GM12878 (cell line): ENCODE measurements at regions of chr15 and their contacts with region 1.

Region 1: GRCh38 chr15:90233376-90234095 is at the start of gene CIB1:
- DNase-seq: no peak
- ATAC-seq: peak; percentile 88
- H3K4me3 ChIP-seq: peak within 1 kb of the TSS; percentile 79
- H3K27ac ChIP-seq: peak within 1 kb of the TSS; percentile 85
- H3K4me1 ChIP-seq: peaks cover 28% of the 10 kb centered on the region
- H3K27me3 ChIP-seq: no peaks in the 10 kb centered on the region
- CTCF ChIP-seq: peak in 2 of 3 experiments; percentile 44 to 61; a peak in 3 of 6 replicates
- EP300 ChIP-seq: peak in 1 of 2 experiments; percentile 8; a peak in 1 of 4 replicates
- POLR2A ChIP-seq: peak; percentile 89
- RAD21 ChIP-seq: no peak
- polyA plus RNA-seq, gene CIB1: 10.8 to 42.5 TPM

Region 2: DNA sequence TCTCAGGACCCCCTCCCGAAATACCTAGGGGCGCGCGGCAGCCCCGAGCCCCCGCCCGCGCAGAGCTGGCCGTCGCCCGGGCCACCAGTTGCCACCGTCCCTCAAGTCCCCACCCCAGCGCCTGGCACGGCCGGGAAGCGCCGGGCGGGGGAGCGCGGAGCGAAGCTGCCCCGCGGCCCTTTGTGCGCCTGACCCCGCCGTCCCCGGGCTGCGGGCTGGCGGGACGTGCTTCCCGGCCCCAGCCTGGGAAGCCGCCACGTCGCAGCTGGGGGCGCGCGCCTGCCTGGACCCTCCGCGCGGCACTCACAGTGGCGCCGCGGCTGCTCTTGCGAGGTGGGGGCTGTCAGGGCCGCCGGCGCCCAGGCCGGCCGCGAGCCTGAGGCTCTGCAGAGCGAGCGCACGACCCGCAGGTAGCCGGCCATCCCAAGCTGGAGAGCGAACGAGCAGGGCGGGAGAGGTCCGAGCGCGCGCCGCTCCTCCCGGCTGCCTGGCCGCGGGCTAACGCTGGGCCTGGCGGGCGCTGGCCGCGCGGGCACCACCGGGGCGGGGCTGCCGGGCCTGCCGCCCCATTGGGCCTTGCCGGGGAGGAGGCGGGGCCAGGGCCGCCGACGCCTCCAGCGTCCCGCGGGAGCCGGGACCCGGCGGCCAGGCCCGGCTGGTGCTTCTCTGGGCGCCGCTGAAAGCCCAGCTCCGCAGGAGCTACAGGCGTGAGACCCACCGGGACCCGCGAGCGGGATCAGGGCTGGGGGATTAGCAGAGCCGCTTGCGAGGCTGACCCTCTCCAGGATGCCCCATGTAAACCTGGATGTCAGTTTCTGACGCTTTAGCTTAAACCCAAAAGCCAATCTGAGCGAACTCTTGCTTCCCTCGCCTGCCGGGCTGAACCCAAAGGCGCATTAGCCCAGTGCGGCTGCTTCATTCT is 131.3 kb before region 1 on chr15 and contains the start of gene IDH2:
- CTCF ChIA-PET with region 1: interaction called, 3 read pairs
- POLR2A ChIA-PET with region 1: interaction called, 10 read pairs
- RAD21 ChIA-PET with region 1: interaction called, 10 read pairs
- SMC1A ChIA-PET with region 1: interaction called, 3 read pairs
- in situ Hi-C with region 1: no loop called
- intact Hi-C with region 1: loop called (anchors 5 kb)
- DNase-seq: no peak
- ATAC-seq: peak; percentile 76
- H3K4me3 ChIP-seq: peak within 1 kb of the TSS; percentile 79
- H3K27ac ChIP-seq: peak within 1 kb of the TSS; percentile 91
- H3K4me1 ChIP-seq: peaks cover 34% of the 10 kb centered on the region
- H3K27me3 ChIP-seq: no peaks in the 10 kb centered on the region
- CTCF ChIP-seq: no peak
- EP300 ChIP-seq: no peak
- POLR2A ChIP-seq: peak; percentile 91
- RAD21 ChIP-seq: no peak
- polyA plus RNA-seq, gene IDH2: 2.3 to 15.4 TPM

Region 3: GRCh38 chr15:90184786-90185569 is 48.6 kb before region 1 on chr15:
- CTCF ChIA-PET with region 1: interaction called, 7 read pairs
- POLR2A ChIA-PET with region 1: interaction called, 30 read pairs
- RAD21 ChIA-PET with region 1: interaction called, 6 read pairs
- SMC1A ChIA-PET with region 1: interaction called, 12 read pairs
- in situ Hi-C with region 1: no loop called
- intact Hi-C with region 1: loop called (anchors 5 kb)
- DNase-seq: no peak
- ATAC-seq: peak; percentile 92
- H3K4me3 ChIP-seq: peak overlapping the region; percentile 80
- H3K27ac ChIP-seq: peak overlapping the region; percentile 86
- H3K4me1 ChIP-seq: peaks cover 16% of the 10 kb centered on the region
- H3K27me3 ChIP-seq: no peaks in the 10 kb centered on the region
- CTCF ChIP-seq: no peak
- EP300 ChIP-seq: no peak
- POLR2A ChIP-seq: peak; percentile 66
- RAD21 ChIP-seq: no peak

Region 4: DNA sequence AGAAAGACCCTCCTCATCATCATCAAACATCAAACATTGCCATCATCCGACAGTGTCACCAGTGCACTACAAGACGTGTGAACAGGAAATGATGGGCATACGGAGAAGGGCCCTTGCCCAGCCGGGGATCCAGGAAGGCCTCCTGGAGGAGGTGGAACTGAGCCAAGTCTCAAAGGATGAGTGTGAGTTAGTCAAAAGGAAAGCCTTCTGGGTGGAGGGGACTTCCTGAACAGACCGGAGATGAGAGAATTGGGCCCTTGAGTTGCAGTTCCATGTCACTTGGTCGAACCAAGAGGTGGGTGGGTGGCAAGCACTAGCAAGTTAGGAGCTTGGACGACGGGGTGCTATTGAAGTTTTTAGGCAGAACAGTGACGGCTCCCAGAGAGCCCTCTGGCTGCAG is 23.9 kb before region 1 on chr15:
- CTCF ChIA-PET with region 1: interaction called, 8 read pairs
- POLR2A ChIA-PET with region 1: interaction called, 25 read pairs
- RAD21 ChIA-PET with region 1: interaction called, 3 read pairs
- SMC1A ChIA-PET with region 1: interaction called, 11 read pairs
- in situ Hi-C with region 1: no loop called
- intact Hi-C with region 1: no loop called
- DNase-seq: peak; percentile 57
- ATAC-seq: peak; percentile 87
- H3K4me3 ChIP-seq: no peak overlapping the region
- H3K27ac ChIP-seq: peak overlapping the region; percentile 56
- H3K4me1 ChIP-seq: peaks cover 25% of the 10 kb centered on the region
- H3K27me3 ChIP-seq: no peaks in the 10 kb centered on the region
- CTCF ChIP-seq: no peak
- EP300 ChIP-seq: 0 out of 4 replicates have a peak, but pooled peaks of 1 of the 2 experiments have one; percentile 36
- POLR2A ChIP-seq: no peak
- RAD21 ChIP-seq: no peak

Region 5: DNA sequence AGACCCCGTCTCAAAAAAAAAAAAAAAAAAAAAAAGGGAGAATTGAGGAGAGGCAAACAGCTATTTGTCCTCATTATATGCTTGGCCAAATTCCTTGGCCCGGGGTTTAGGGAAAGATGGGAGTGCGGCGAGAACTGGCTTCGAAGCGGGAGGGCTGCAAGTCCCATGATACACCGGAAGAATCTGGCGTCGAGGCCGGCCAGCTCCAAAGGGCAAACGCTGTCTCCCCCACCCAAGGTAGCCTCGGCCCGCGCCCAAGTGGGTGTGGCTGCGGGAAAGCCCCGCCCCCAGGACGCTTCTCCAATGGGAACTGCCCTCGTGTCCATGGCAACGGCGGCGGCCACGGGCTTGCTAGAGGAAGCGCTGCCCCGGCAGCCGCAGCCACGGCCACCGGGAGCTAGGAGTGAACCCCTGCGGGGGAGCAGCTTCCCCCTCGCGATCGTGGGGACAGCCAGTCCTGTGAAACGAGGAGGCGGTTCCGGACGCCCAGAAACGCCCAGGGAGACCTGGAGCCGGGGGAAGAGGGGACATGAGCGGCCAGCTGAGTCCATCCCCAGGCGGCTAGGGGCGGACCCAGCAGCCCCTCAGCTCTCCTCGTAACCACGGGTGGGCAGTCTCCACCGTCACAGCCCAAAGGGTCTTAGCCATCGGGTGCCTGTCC is 15.8 kb after region 1 on chr15 and contains the start of gene TTLL13:
- CTCF ChIA-PET with region 1: interaction called, 3 read pairs
- POLR2A ChIA-PET with region 1: interaction called, 10 read pairs
- RAD21 ChIA-PET with region 1: interaction called, 22 read pairs
- SMC1A ChIA-PET with region 1: interaction called, 10 read pairs
- in situ Hi-C with region 1: no loop called
- intact Hi-C with region 1: no loop called
- DNase-seq: no peak
- ATAC-seq: peak; percentile 95
- H3K4me3 ChIP-seq: peak within 1 kb of the TSS; percentile 55; the same call in 1 of the 2 replicates
- H3K27ac ChIP-seq: no peak within 1 kb of the TSS
- H3K4me1 ChIP-seq: peaks cover 2% of the 10 kb centered on the region; the same call in 1 of the 2 replicates
- H3K27me3 ChIP-seq: peaks cover 0 to 2% of the 10 kb centered on the region in 2 experiments; a peak in 1 of 4 replicates
- CTCF ChIP-seq: no peak
- EP300 ChIP-seq: no peak
- POLR2A ChIP-seq: no peak
- RAD21 ChIP-seq: no peak
- polyA plus RNA-seq, gene TTLL13: 0.03 TPM in 1 of 2 experiments, not detected in the other

Region 6: DNA sequence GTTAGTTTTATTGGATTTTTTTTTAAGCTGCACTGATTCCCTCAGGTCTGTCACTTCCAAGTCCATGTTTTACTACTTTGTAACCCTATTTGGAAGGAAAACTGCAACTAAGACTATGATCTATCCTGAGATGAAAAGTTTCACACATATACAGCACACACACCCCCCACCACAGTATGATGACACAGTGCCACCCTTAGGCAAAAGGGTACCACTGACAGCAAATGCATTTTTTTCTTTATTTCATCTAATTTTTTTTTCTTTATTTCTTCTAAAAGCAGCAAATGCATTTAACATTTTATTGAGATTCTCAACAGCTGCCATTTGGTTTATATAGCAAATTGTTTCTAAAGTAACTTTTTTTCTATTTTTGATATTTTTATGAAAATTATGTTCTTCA is 53.1 kb after region 1 on chr15:
- CTCF ChIA-PET with region 1: interaction called, 27 read pairs
- POLR2A ChIA-PET with region 1: interaction called, 4 read pairs
- RAD21 ChIA-PET with region 1: interaction called, 6 read pairs
- SMC1A ChIA-PET with region 1: interaction called, 18 read pairs
- in situ Hi-C with region 1: no loop called
- intact Hi-C with region 1: loop called (anchors 5 kb)
- DNase-seq: no peak
- ATAC-seq: peak; percentile 92
- H3K4me3 ChIP-seq: no peak overlapping the region
- H3K27ac ChIP-seq: no peak overlapping the region
- H3K4me1 ChIP-seq: no peaks in the 10 kb centered on the region
- H3K27me3 ChIP-seq: no peaks in the 10 kb centered on the region
- CTCF ChIP-seq: peak; percentile 54 to 80 (median 61); a peak in 5 of 6 replicates
- EP300 ChIP-seq: no peak
- POLR2A ChIP-seq: no peak
- RAD21 ChIP-seq: peak; percentile 90